Mammary epithelial cell (primary cell): ENCODE measurements at regions of chr19 and their contacts with region 1.

Region 1: GRCh38 chr19:11856596-11857250 is 8.2 kb downstream of the ZNF439 start:
- DNase-seq: no peak
- H3K4me3 ChIP-seq: no peak overlapping the region
- H3K27ac ChIP-seq: no peak overlapping the region
- H3K4me1 ChIP-seq: no peaks in the 10 kb centered on the region
- H3K27me3 ChIP-seq: no peaks in the 10 kb centered on the region
- CTCF ChIP-seq: no peak

Region 2: GRCh38 chr19:11942843-11943108 is 86.1 kb after region 1 on chr19:
- CTCF ChIA-PET with region 1: no interaction called
- dilution Hi-C with region 1: loop called (anchors 5 kb)
- in situ Hi-C with region 1: no loop called
- intact Hi-C with region 1: no loop called
- DNase-seq: no peak
- H3K4me3 ChIP-seq: no peak overlapping the region
- H3K27ac ChIP-seq: no peak overlapping the region
- H3K4me1 ChIP-seq: no peaks in the 10 kb centered on the region
- H3K27me3 ChIP-seq: no peaks in the 10 kb centered on the region
- CTCF ChIP-seq: no peak